MCF 10A (cell line): ENCODE measurements at regions of chr3 and their contacts with region 1.

Region 1: GRCh38 chr3:44065311-44066094 is 176.2 kb upstream of the TOPAZ1 start:
- DNase-seq: peak; percentile 96
- H3K4me3 Mint-ChIP-seq: no peak overlapping the region
- H3K27ac Mint-ChIP-seq: no peak overlapping the region
- H3K4me1 Mint-ChIP-seq: peaks cover 24% of the 10 kb centered on the region
- H3K27me3 Mint-ChIP-seq: no peaks in the 10 kb centered on the region
- CTCF ChIP-seq: no peak

Region 2: DNA sequence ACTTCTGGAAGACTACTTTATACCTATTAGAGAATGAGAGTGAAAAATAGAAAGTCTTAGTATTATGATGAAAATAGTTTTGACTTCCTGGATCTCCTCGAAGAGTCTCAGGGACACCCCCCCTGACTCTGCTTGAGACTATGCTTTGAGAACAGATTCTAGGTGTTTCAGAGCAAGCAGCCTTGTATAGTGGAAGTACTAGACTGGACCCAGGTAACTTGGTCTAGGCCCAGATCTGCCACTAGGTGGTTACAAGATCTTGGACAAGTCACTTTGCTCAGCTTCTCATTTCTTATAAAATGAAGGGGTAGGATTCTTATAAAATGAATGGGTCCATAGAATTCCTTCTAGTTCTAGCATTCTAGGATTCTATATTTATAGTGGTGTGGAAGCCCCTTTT is 365.6 kb before region 1 on chr3:
- CTCF ChIA-PET with region 1: no interaction called
- POLR2A ChIA-PET with region 1: no interaction called
- intact Hi-C with region 1: loop called (anchors 5 kb)
- DNase-seq: peak; percentile 52
- H3K4me3 Mint-ChIP-seq: no peak overlapping the region
- H3K27ac Mint-ChIP-seq: no peak overlapping the region
- H3K4me1 Mint-ChIP-seq: peaks cover 46% of the 10 kb centered on the region
- H3K27me3 Mint-ChIP-seq: no peaks in the 10 kb centered on the region
- CTCF ChIP-seq: peak; percentile 38

Region 3: DNA sequence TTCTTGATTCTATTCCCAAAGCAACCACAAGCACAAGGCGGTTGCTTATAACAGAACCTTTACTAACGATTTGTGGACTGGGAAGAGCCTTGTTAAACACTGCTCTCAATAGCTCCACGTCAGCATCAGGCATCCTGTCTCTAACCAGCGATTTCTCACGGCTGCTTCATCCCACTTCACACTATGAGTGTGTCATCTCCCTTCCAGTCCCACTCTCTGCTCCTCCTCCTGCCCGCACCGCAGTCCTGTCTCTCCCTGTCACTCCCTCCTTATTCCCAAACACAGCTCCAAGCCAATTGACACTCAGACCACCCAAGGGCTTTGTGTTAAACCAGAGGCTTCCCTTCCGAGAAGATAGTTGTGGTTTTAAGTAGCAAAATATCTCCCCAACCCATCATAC is 280.0 kb before region 1 on chr3:
- CTCF ChIA-PET with region 1: no interaction called
- POLR2A ChIA-PET with region 1: no interaction called
- intact Hi-C with region 1: no loop called
- DNase-seq: no peak
- H3K4me3 Mint-ChIP-seq: no peak overlapping the region
- H3K27ac Mint-ChIP-seq: no peak overlapping the region
- H3K4me1 Mint-ChIP-seq: no peaks in the 10 kb centered on the region
- H3K27me3 Mint-ChIP-seq: no peaks in the 10 kb centered on the region
- CTCF ChIP-seq: no peak

Region 4: DNA sequence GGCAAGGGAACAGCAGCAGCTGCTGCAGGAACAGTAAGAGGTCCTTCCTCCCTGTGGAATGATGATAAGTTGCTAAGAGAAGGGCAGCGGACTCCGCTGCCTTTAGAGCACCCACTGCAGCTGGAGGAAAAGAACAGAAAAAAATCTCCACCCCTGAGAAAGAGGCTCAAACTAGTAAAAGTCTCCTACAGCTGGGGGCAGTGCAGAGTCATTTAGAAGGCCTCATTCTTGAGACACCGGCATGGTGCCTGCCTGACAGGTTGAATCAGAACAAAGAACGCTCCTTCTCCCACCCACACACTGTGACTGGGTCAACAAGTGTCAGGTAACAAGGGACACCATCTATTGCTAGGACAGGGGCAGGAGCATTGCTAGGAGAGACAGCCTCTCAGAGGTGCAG is 186.3 kb before region 1 on chr3:
- CTCF ChIA-PET with region 1: no interaction called
- POLR2A ChIA-PET with region 1: no interaction called
- intact Hi-C with region 1: loop called (anchors 10 kb)
- DNase-seq: peak; percentile 50
- H3K4me3 Mint-ChIP-seq: no peak overlapping the region
- H3K27ac Mint-ChIP-seq: no peak overlapping the region
- H3K4me1 Mint-ChIP-seq: peaks cover 1% of the 10 kb centered on the region
- H3K27me3 Mint-ChIP-seq: no peaks in the 10 kb centered on the region
- CTCF ChIP-seq: peak; percentile 8